ENCODE measurements at regions of chr5 and their contacts with region 1.

Region 1: GRCh38 chr5:52948418-52949076 is 40.6 kb upstream of the ITGA2 start:
- DNase-seq: no peak
- H3K4me3 ChIP-seq: no peak overlapping the region
- H3K27ac ChIP-seq: no peak overlapping the region
- H3K4me1 ChIP-seq: no peaks in the 10 kb centered on the region
- H3K27me3 ChIP-seq: no peaks in the 10 kb centered on the region
- CTCF ChIP-seq: peak in 2 of 3 experiments; percentile 73 to 78; a peak in 3 of 4 replicates
- EP300 ChIP-seq: no peak
- POLR2A ChIP-seq: no peak
- RAD21 ChIP-seq: peak; percentile 90 to 94

Region 2: GRCh38 chr5:52844885-52845284 is 103.7 kb before region 1 on chr5:
- CTCF ChIA-PET with region 1: no interaction called
- POLR2A ChIA-PET with region 1: no interaction called
- DNase-seq: no peak
- H3K4me3 ChIP-seq: no peak overlapping the region
- H3K27ac ChIP-seq: no peak overlapping the region
- H3K4me1 ChIP-seq: no peaks in the 10 kb centered on the region
- H3K27me3 ChIP-seq: peaks cover 0 to 2% (median 0%) of the 10 kb centered on the region in 4 experiments; a peak in 1 of 7 replicates
- CTCF ChIP-seq: no peak
- EP300 ChIP-seq: no peak
- POLR2A ChIP-seq: no peak
- RAD21 ChIP-seq: no peak

Region 3: GRCh38 chr5:52893105-52893504 is 55.4 kb before region 1 on chr5:
- CTCF ChIA-PET with region 1: no interaction called
- POLR2A ChIA-PET with region 1: no interaction called
- DNase-seq: no peak
- H3K4me3 ChIP-seq: no peak overlapping the region
- H3K27ac ChIP-seq: no peak overlapping the region
- H3K4me1 ChIP-seq: no peaks in the 10 kb centered on the region
- H3K27me3 ChIP-seq: no peaks in the 10 kb centered on the region
- CTCF ChIP-seq: no peak
- EP300 ChIP-seq: no peak
- POLR2A ChIP-seq: no peak
- RAD21 ChIP-seq: no peak

Region 4: GRCh38 chr5:52938226-52938625 is 10.3 kb before region 1 on chr5:
- CTCF ChIA-PET with region 1: interaction called, 17 read pairs
- POLR2A ChIA-PET with region 1: no interaction called
- DNase-seq: no peak
- H3K4me3 ChIP-seq: no peak overlapping the region
- H3K27ac ChIP-seq: no peak overlapping the region
- H3K4me1 ChIP-seq: no peaks in the 10 kb centered on the region
- H3K27me3 ChIP-seq: no peaks in the 10 kb centered on the region
- CTCF ChIP-seq: no peak
- EP300 ChIP-seq: no peak
- POLR2A ChIP-seq: no peak
- RAD21 ChIP-seq: no peak

Region 5: DNA sequence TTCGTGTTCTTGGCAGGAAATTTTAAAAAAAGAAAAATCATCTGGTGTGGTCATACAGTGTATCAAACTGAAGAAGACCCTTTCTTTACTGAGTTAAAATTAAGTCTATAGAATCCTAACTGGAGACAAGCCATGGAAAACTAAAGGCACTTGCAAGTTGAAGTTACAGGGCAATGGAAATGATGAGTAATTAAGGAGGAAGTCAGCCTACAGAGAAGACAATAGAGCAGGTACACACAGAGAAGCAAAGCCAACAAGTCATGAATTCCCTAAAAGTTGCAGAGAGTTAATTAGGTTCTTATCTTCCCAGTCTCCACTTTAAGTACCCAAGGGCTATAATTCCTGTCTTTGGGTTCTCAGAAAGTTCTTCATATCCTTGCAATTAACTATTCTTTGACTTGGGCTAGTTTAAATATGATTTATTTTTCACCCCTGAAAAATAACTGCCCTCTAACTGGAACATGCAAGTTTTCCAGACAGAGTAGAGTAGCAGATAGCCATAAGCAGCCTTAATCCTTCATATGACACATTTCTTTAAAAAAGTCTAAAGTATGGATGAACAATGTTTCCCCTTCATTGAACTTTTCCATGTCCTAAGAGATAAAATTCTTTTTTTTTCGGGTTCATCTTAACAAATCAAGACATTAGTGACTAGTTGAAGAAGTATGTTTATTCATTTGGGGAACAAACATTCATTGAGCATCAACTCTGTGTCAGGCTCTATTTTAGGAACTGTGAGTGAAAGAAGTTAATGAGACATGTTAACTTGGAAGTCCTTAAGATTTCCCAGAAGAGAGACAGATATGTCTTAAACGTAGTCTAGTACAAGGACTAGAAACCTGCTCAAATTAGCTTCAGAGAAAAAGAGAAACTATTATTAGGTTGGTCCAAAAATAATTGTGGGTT is 35.4 kb after region 1 on chr5:
- CTCF ChIA-PET with region 1: interaction called, 44 read pairs
- POLR2A ChIA-PET with region 1: no interaction called
- DNase-seq: no peak
- H3K4me3 ChIP-seq: no peak overlapping the region
- H3K27ac ChIP-seq: no peak overlapping the region
- H3K4me1 ChIP-seq: no peaks in the 10 kb centered on the region; a peak in 1 of 7 replicates
- H3K27me3 ChIP-seq: peaks cover 0 to 12% (median 9%) of the 10 kb centered on the region in 4 experiments; a peak in 4 of 7 replicates
- CTCF ChIP-seq: no peak
- EP300 ChIP-seq: no peak
- POLR2A ChIP-seq: no peak
- RAD21 ChIP-seq: no peak

Region 6: GRCh38 chr5:52997424-52997823 is 48.9 kb after region 1 on chr5:
- CTCF ChIA-PET with region 1: interaction called, 12 read pairs
- POLR2A ChIA-PET with region 1: no interaction called
- DNase-seq: no peak
- H3K4me3 ChIP-seq: no peak overlapping the region
- H3K27ac ChIP-seq: no peak overlapping the region
- H3K4me1 ChIP-seq: no peaks in the 10 kb centered on the region
- H3K27me3 ChIP-seq: peaks cover 0 to 2% (median 0%) of the 10 kb centered on the region in 4 experiments; a peak in 1 of 7 replicates
- CTCF ChIP-seq: no peak
- EP300 ChIP-seq: no peak
- POLR2A ChIP-seq: no peak
- RAD21 ChIP-seq: no peak

Region 7: DNA sequence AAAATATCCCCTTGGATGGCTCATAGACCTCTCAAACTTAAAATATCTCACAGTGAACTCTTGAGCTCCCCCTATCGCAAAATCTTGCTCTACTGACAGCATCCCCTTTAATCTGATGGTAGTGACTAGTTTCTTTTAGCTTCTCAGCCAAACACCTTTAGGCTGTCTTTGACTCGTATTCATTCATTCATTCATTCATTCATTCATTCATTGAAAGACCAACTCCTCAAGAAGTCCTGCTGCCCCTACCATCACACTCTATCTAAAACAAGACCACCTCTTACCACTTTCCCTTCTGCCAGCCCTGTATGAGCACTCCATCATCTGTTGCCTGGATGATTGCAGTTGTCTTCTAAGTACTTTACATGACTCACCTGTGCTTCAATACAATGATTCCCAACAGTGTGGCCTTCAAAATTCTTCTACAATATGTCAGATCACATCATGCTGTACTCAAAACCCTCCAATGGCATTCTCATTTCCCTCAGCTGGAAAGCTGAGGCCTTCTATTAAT is 87.4 kb after region 1 on chr5:
- CTCF ChIA-PET with region 1: interaction called, 25 read pairs
- POLR2A ChIA-PET with region 1: no interaction called
- DNase-seq: no peak
- H3K4me3 ChIP-seq: no peak overlapping the region
- H3K27ac ChIP-seq: no peak overlapping the region
- H3K4me1 ChIP-seq: no peaks in the 10 kb centered on the region
- H3K27me3 ChIP-seq: no peaks in the 10 kb centered on the region
- CTCF ChIP-seq: peak in 2 of 3 experiments; percentile 35 to 57; a peak in 2 of 4 replicates
- EP300 ChIP-seq: no peak
- POLR2A ChIP-seq: no peak
- RAD21 ChIP-seq: peak; percentile 18 to 32; a peak in 3 of 4 replicates

Region 8: GRCh38 chr5:53071738-53072137 is 123.2 kb after region 1 on chr5:
- CTCF ChIA-PET with region 1: interaction called, 10 read pairs
- POLR2A ChIA-PET with region 1: no interaction called
- DNase-seq: no peak
- H3K4me3 ChIP-seq: no peak overlapping the region
- H3K27ac ChIP-seq: no peak overlapping the region
- H3K4me1 ChIP-seq: no peaks in the 10 kb centered on the region
- H3K27me3 ChIP-seq: no peaks in the 10 kb centered on the region
- CTCF ChIP-seq: no peak
- EP300 ChIP-seq: no peak
- POLR2A ChIP-seq: no peak
- RAD21 ChIP-seq: no peak

Region 9: GRCh38 chr5:53095931-53096525 is 147.5 kb after region 1 on chr5:
- CTCF ChIA-PET with region 1: interaction called, 72 read pairs
- POLR2A ChIA-PET with region 1: no interaction called
- DNase-seq: peak; percentile 27 to 73
- H3K4me3 ChIP-seq: no peak overlapping the region
- H3K27ac ChIP-seq: no peak overlapping the region
- H3K4me1 ChIP-seq: no peaks in the 10 kb centered on the region
- H3K27me3 ChIP-seq: no peaks in the 10 kb centered on the region
- CTCF ChIP-seq: peak in 2 of 3 experiments; percentile 59 to 73; a peak in 3 of 4 replicates
- EP300 ChIP-seq: no peak
- POLR2A ChIP-seq: no peak
- RAD21 ChIP-seq: peak; percentile 60 to 67

Measured in H1 (cell line).